ENCODE measurements at regions of chr11 and their contacts with region 1.

Region 1: GRCh38 chr11:3841426-3842350 is 929 bp upstream of the RHOG start:
- DNase-seq: peak; percentile 89 to 97 (median 94)
- ATAC-seq: peak; percentile 74 to 82
- H3K4me3 Mint-ChIP-seq: peak overlapping the region; percentile 84 to 96 (median 88)
- H3K27ac Mint-ChIP-seq: peak overlapping the region; percentile 90 to 100 (median 98)
- H3K4me1 Mint-ChIP-seq: peaks cover 28 to 51% (median 41%) of the 10 kb centered on the region in 4 donors
- H3K27me3 Mint-ChIP-seq: no peaks in the 10 kb centered on the region

Region 2: GRCh38 chr11:3781423-3781822 is 60.3 kb before region 1 on chr11:
- POLR2A ChIA-PET with region 1: interaction called, 10 read pairs
- DNase-seq: no peak
- ATAC-seq: no peak
- H3K4me3 Mint-ChIP-seq: no peak overlapping the region
- H3K27ac Mint-ChIP-seq: peak overlapping the region in 8 of 10 donors; percentile 4 to 95 (median 36)
- H3K4me1 Mint-ChIP-seq: peaks cover 17 to 48% (median 38%) of the 10 kb centered on the region in 4 donors
- H3K27me3 Mint-ChIP-seq: no peaks in the 10 kb centered on the region

Region 3: DNA sequence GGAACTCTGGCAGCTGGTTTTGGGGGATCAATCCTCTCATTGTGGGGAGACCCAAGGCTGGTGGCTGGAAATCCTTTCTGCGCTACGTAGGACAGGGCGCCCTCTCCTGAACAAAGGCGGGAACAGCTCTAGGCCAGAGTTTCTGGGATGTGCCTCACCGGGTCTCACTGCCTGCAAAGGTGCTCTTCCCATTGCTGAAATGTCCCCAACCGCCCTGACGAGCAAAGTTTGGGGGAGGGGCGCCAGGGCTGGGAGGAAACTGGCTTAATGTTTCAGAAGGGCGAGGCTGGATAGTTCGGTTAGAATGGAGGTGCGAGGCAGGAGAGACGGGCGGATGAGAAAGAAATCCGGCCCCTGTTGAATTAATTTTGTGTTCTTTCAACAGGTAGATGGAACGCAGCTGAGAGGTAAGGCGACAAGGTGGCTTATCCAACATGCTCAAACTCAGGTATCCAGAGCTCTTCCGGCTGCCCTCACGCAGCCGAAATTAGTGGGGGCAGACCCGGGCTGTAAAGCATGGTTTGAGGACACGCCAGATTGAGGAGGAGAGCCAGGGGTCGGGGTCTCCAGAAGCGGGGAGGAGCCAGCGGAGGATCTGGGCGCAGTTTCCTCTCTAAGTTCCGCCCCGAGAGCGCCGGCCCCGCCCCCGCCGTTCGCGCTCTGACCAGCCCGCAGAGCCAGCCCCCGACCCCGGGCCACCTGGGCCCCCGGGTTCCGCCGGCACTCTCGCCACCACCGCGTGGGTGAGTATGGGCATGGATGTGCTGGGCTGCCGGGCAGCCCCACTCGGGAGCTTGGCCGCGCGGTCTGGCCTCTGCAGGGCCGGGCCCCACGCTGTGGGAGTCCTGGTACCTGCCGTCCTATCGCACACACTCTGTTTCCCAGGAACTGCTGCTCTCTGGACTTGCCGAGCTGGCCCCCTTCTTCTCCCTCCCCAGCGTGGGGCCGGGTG is 33.5 kb before region 1 on chr11 and contains the start of gene PGAP2:
- POLR2A ChIA-PET with region 1: interaction called, 24 read pairs
- DNase-seq: peak; percentile 32 to 74 (median 54)
- ATAC-seq: peak; percentile 70 to 81
- H3K4me3 Mint-ChIP-seq: peak within 1 kb of the TSS; percentile 94 to 100 (median 97)
- H3K27ac Mint-ChIP-seq: peak within 1 kb of the TSS; percentile 82 to 99 (median 94)
- H3K4me1 Mint-ChIP-seq: peaks cover 12 to 30% (median 17%) of the 10 kb centered on the region in 4 donors
- H3K27me3 Mint-ChIP-seq: no peaks in the 10 kb centered on the region
- polyA plus RNA-seq, gene PGAP2: 13.6 to 24.2 (median 21.9) TPM

Region 4: DNA sequence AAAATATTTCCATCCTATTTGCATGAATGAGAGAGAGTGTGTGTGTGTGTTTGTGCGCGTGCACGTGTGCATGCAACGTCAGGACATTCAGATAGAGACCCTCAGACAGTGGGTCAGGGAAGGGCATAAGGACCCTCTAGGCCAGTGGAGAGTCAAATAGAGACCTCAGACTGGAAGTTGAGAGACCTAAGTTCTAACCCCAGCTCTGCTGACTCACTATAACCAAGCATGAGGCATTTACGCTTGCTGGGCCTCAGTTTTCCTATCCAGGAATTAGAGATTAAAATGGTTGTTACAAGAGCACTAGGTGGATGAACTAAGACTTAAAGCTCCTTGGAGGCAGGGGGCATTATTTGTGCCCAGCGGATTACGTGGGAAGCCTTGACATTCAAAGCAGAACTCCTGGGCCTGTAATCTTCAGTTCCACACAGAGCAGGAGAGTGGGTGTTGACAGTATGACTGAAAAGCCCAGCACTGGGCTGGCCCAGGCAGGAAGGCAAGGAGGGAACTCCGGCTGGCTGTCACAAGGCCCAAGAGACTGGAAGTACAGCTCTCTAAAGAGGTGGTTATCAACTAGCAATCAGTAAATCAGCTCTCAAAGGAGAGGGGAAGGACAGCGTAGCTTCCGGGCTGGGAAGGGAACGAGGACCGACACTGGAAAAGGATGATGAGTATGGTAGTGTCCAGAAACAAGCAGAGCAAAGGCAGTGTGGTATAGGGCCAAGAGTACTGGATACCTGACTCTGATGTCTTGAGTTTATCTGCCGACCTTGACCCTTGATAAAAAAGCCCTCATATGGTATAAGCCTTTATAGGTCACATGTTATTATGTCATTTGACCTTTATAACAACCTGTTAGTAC is 10.1 kb before region 1 on chr11:
- POLR2A ChIA-PET with region 1: interaction called, 81 read pairs
- DNase-seq: no peak
- ATAC-seq: peak; percentile 24 to 42
- H3K4me3 Mint-ChIP-seq: peak overlapping the region in 9 of 10 donors; percentile 13 to 87 (median 58)
- H3K27ac Mint-ChIP-seq: peak overlapping the region; percentile 89 to 99 (median 94)
- H3K4me1 Mint-ChIP-seq: peaks cover 54 to 86% (median 78%) of the 10 kb centered on the region in 4 donors
- H3K27me3 Mint-ChIP-seq: no peaks in the 10 kb centered on the region

Region 5: DNA sequence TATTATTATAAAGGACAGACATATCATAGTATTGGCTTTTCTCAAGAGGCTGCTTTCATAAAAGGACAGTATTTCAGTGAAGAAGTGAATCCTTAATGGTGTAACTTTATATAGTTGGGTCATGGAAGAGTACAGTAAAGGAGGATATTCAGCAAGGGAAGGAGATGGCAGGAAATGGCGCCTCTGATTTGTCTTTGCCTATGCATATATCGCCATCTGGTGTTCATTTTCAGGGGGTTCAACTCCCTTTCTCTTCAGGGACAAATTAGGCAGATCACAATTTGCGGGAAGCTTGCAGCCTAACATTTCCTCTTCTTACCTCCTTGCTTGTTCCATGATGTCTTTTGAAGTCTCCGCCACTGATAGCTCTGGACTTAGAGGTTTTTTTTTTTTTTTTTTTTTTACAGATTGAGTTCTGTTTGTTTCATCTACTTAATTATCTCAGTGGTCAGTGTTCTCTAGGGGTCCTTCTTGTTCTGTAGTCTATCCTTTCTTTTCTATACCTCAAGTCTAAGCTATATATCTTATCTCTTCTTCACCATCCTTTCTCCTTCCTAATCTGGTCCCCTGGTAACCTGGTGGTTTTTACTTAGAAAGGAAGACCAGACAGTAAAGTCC is 231.1 kb after region 1 on chr11:
- POLR2A ChIA-PET with region 1: interaction called, 11 read pairs
- DNase-seq: peak in 9 of 10 donors; percentile 39 to 79 (median 59)
- ATAC-seq: peak; percentile 84 to 85
- H3K4me3 Mint-ChIP-seq: no peak overlapping the region
- H3K27ac Mint-ChIP-seq: peak overlapping the region; percentile 36 to 91 (median 84)
- H3K4me1 Mint-ChIP-seq: peaks cover 31 to 57% (median 48%) of the 10 kb centered on the region in 4 donors
- H3K27me3 Mint-ChIP-seq: no peaks in the 10 kb centered on the region

Measured in naive thymus-derived CD8-positive, alpha-beta T cell (primary cell).